ENCODE measurements at regions of chr4 and their contacts with region 1.

Region 1: DNA sequence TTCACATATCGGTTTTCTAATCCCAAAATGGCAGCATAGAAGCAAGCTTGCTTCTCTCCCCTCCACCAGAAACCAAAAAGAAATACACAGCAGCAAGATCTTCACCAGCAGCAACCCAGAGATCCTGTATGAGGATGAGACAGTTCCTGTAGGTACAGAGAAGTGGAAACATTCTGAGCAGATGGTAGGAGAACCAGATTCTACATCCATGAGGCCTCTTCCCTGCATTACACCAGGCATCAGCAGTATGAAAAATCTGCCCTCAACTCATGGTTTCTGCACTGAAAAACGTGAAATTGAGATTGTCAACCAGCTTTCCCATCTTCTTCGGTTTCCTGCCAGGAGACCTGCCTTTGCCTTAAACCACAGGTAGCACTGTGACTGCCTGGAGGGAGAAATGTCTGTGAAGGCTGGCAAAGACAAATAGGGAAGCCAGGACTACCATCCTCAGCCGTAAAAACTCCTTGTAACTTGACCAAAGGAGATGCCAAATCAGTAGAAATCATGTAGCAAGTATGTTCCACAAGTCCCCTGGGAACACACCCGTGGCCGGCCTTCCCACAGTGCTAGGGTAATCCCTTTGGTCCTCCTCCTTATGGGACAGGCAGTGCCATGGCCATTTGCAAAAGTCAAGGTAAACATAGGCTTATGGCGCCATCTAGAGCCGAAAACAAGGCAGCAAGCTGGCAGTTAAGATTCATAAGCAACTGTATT is 24.0 kb upstream of the MTHFD2L start:
- DNase-seq: peak; percentile 14
- H3K4me3 Mint-ChIP-seq: no peak overlapping the region
- H3K27ac Mint-ChIP-seq: no peak overlapping the region
- H3K4me1 Mint-ChIP-seq: no peaks in the 10 kb centered on the region
- H3K27me3 Mint-ChIP-seq: peaks cover 13% of the 10 kb centered on the region

Region 2: GRCh38 chr4:73593631-73594241 is 540.2 kb before region 1 on chr4:
- intact Hi-C with region 1: loop called (anchors 10 kb)
- DNase-seq: no peak
- H3K4me3 Mint-ChIP-seq: no peak overlapping the region
- H3K27ac Mint-ChIP-seq: no peak overlapping the region
- H3K4me1 Mint-ChIP-seq: no peaks in the 10 kb centered on the region
- H3K27me3 Mint-ChIP-seq: no peaks in the 10 kb centered on the region